Cardiac septum (tissue), 1 donor: ENCODE measurements at regions of chr4 and their contacts with region 1.

Region 1: GRCh38 chr4:17166954-17167353 is 268.5 kb upstream of the LDB2 start:
- DNase-seq: peak; percentile 80

Region 2: DNA sequence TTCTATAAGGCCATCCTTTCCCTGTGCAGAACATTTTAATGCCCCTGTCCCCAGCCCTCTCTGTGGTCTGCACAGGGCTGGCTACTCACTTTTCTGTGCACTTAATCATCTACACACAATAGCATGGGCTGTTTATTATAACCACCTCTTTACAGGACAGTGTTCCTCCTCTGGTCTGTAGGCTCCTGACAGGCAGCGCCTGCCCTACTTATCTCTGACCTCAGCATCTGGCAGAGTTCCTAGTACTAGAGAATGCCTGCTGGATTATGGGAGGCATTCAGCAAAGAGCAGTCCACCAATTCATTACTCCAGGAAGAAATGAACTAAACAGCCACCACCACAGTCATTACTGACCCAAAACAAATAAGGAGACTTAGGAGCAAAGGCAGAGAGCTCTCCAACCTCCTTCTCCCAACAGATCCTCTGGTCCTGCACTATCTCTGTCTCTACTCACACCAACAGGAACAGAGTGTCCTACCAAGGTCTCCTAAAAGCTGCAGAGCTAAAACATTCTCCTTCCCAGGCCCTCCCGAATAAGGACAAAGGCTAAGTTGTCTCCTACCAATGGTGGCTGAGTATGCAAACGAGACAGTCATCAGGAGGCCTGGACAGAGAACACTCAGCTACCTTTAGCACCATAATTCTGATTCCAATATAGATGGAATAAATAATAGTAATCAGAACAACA is 65.8 kb after region 1 on chr4:
- intact Hi-C with region 1: loop called (anchors 2 kb)
- DNase-seq: no peak